Activated CD8-positive, alpha-beta T cell treated with anti-CD3 and anti-CD28 coated beads for 36 hours (primary cell): ENCODE measurements at regions of chr1 and their contacts with region 1.

Region 1: GRCh38 chr1:210394281-210394821 is 65.6 kb downstream of the HHAT start:
- DNase-seq: peak; percentile 63
- ATAC-seq: peak; percentile 58
- H3K4me3 Mint-ChIP-seq: no peak overlapping the region
- H3K27ac Mint-ChIP-seq: peak overlapping the region; percentile 40
- H3K4me1 Mint-ChIP-seq: peaks cover 43% of the 10 kb centered on the region
- H3K27me3 Mint-ChIP-seq: peaks cover 3% of the 10 kb centered on the region
- CTCF ChIP-seq: no peak

Region 2: GRCh38 chr1:210360852-210361477 is 33.4 kb before region 1 on chr1:
- CTCF ChIA-PET with region 1: interaction called, 3 read pairs
- POLR2A ChIA-PET with region 1: no interaction called
- intact Hi-C with region 1: loop called (anchors 5 kb)
- DNase-seq: no peak
- ATAC-seq: peak; percentile 73
- H3K4me3 Mint-ChIP-seq: no peak overlapping the region
- H3K27ac Mint-ChIP-seq: no peak overlapping the region
- H3K4me1 Mint-ChIP-seq: peaks cover 4% of the 10 kb centered on the region
- H3K27me3 Mint-ChIP-seq: no peaks in the 10 kb centered on the region
- CTCF ChIP-seq: peak; percentile 51

Region 3: DNA sequence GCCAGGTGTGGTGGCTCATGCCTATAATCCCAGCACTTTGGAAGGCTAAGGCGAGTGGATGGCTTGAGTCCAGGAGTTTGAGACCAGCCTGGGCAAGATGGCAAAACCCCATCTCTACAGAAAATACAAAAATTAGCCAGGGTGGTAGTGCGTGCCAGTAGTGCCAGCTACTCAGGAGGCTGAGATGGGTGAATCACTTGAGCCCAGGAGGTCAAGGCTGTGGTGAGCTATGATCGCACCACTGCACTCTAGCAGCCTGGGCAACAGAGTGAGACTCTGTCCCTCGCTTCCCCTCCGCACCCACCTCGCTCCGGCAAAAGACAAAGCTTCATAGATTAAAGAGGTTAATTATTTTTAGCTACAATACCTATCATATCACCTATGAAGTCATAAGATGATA is 34.3 kb after region 1 on chr1:
- CTCF ChIA-PET with region 1: no interaction called
- POLR2A ChIA-PET with region 1: no interaction called
- intact Hi-C with region 1: no loop called
- DNase-seq: no peak
- ATAC-seq: no peak
- H3K4me3 Mint-ChIP-seq: no peak overlapping the region
- H3K27ac Mint-ChIP-seq: no peak overlapping the region
- H3K4me1 Mint-ChIP-seq: no peaks in the 10 kb centered on the region
- H3K27me3 Mint-ChIP-seq: no peaks in the 10 kb centered on the region
- CTCF ChIP-seq: no peak

Region 4: GRCh38 chr1:210464519-210465039 is 70.2 kb after region 1 on chr1:
- CTCF ChIA-PET with region 1: no interaction called
- POLR2A ChIA-PET with region 1: no interaction called
- intact Hi-C with region 1: no loop called
- DNase-seq: no peak
- ATAC-seq: peak; percentile 94
- H3K4me3 Mint-ChIP-seq: no peak overlapping the region
- H3K27ac Mint-ChIP-seq: no peak overlapping the region
- H3K4me1 Mint-ChIP-seq: peaks cover 10% of the 10 kb centered on the region
- H3K27me3 Mint-ChIP-seq: no peaks in the 10 kb centered on the region
- CTCF ChIP-seq: no peak